Right ventricle myocardium inferior (tissue), 1 donor: ENCODE measurements at regions of chr12 and their contacts with region 1.

Region 1: DNA sequence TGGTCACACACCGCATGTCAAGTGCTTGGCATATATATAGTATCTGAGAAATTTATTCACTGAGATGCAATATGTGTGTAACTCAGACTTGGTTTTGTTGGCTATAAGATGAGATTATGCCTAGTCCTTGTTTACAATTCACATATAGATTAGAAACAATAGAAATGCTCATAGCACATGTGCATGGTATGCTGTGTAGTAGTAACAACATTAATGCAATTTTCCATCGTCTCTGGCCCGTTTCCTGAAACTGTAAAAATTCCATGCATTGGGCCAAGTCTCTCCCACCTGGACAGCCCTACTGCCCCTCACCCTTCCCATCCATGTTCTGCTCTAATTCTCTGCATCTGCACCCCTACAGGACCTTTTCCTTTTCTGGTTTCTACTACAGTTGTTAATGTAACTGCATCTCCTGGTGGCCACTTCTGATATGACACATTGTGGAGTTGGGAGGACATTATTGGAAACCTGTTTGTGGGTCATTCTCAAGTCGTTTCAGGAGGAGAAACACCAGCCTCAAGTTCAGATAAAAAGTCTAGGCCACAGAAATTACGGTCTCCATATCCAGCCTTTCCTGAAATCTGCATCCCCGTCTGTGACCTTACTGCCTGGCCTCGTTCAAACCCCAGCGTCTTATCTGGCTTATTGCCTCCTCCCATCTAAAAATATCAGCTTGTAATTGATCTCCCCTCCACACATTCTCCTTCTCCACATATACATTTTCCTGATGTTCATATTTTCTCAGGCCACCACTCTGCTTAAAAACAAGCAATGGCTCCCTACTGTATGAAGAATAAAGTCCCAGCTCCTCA is 37.5 kb downstream of the EMP1 start:
- DNase-seq: no peak
- ATAC-seq: peak; percentile 44

Region 2: GRCh38 chr12:12916135-12916944 is 317.7 kb before region 1 on chr12:
- intact Hi-C with region 1: loop called (anchors 1 kb)
- DNase-seq: peak; percentile 91
- ATAC-seq: peak; percentile 96

Region 3: DNA sequence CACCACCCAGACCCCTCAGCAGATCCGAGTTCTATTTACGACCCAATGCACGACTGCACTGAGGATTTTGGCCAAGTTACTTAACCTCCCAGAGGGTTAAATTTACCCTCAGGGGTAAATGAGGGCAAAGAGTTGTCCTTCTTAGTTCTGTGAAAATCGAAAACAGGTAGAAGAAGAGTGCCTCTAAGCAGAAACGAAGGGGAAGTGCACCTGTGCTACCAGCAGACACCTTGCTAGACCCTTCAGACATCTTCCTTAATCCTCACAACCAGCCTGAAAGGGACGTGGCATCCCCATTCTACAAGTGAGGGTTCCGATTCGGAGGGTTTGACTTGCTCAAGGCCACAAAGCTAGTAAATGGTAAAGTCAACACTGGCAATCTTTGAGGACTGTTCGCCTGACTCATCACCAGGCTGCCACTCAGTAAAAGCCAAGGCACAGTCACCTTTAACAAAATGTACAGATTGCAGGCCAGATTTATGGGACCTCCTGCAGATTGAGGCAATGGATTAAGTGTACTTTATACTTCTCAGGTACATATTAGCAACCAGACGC is 132.1 kb before region 1 on chr12:
- intact Hi-C with region 1: no loop called
- DNase-seq: no peak
- ATAC-seq: no peak

Region 4: GRCh38 chr12:13581031-13581430 is 347.0 kb after region 1 on chr12:
- intact Hi-C with region 1: no loop called
- DNase-seq: no peak
- ATAC-seq: no peak